A673 (cell line): ENCODE measurements at regions of chr1 and their contacts with region 1.

Region 1: DNA sequence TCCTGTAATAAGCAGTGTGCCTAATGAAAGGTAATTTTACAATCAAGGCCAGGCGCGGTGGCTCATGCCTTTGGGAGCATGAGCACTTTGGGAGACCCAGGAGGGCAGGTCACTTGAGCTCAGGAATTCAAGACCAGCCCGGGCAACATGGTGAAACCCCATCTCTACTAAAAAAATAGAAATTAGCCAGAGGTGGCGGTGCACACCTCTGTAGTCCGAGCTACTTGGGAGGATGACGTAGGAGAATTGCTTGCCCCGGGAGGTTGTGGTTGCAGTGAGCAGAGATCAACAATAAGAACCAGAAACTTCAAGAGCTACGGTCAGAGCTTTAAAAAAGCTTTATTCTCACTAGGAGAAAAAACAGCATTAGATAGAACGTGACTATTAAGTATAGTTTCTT is 35.0 kb downstream of the SFPQ start:
- DNase-seq: no peak
- H3K4me3 ChIP-seq: no peak overlapping the region
- H3K27ac ChIP-seq: no peak overlapping the region
- H3K4me1 ChIP-seq: no peaks in the 10 kb centered on the region
- H3K27me3 ChIP-seq: no peaks in the 10 kb centered on the region
- CTCF ChIP-seq: no peak

Region 2: GRCh38 chr1:34896613-34897012 is 261.3 kb before region 1 on chr1:
- CTCF ChIA-PET with region 1: no interaction called
- POLR2A ChIA-PET with region 1: no interaction called
- intact Hi-C with region 1: no loop called
- DNase-seq: no peak
- H3K4me3 ChIP-seq: no peak overlapping the region
- H3K27ac ChIP-seq: no peak overlapping the region
- H3K4me1 ChIP-seq: no peaks in the 10 kb centered on the region
- H3K27me3 ChIP-seq: peaks cover 23% of the 10 kb centered on the region
- CTCF ChIP-seq: 0 out of 2 replicates have a peak, but pooled peaks have one; percentile 18

Region 3: DNA sequence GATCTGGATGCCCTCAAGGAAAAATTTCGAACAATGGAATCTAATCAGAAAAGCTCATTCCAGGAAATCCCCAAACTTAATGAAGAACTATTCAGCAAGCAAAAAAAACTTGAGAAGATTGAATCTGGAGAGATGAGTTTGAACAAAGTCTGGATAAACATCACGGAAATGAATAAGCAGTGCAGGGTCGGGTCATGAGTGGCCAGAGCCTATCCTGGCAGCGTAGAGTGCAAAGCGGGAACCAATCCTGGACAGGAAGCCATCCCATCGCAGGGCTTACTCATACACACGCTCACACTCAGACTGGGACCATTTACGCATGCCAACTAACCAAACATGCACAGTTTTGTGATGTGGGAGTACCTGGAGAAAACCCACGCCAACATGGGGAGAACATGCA is 35.6 kb before region 1 on chr1:
- CTCF ChIA-PET with region 1: no interaction called
- POLR2A ChIA-PET with region 1: interaction called, 10 read pairs
- intact Hi-C with region 1: no loop called
- DNase-seq: no peak
- H3K4me3 ChIP-seq: no peak overlapping the region
- H3K27ac ChIP-seq: no peak overlapping the region
- H3K4me1 ChIP-seq: no peaks in the 10 kb centered on the region
- H3K27me3 ChIP-seq: no peaks in the 10 kb centered on the region
- CTCF ChIP-seq: no peak

Region 4: GRCh38 chr1:35143737-35144508 is 14.0 kb before region 1 on chr1:
- CTCF ChIA-PET with region 1: no interaction called
- POLR2A ChIA-PET with region 1: no interaction called
- intact Hi-C with region 1: no loop called
- DNase-seq: no peak
- H3K4me3 ChIP-seq: no peak overlapping the region
- H3K27ac ChIP-seq: no peak overlapping the region
- H3K4me1 ChIP-seq: no peaks in the 10 kb centered on the region
- H3K27me3 ChIP-seq: no peaks in the 10 kb centered on the region
- CTCF ChIP-seq: no peak